ENCODE measurements at regions of chr20 and their contacts with region 1.

Region 1: GRCh38 chr20:38221119-38221589 is 39.4 kb downstream of the KIAA1755 start:
- DNase-seq: peak; percentile 94
- H3K4me3 ChIP-seq: peak overlapping the region in 1 of 2 experiments; percentile 3; a peak in 2 of 4 replicates
- H3K27ac ChIP-seq: no peak overlapping the region
- H3K4me1 ChIP-seq: peaks cover 24 to 25% of the 10 kb centered on the region in 2 experiments; a peak in 3 of 4 replicates
- H3K27me3 ChIP-seq: no peaks in the 10 kb centered on the region
- CTCF ChIP-seq: peak; percentile 97
- EP300 ChIP-seq: no peak
- RAD21 ChIP-seq: peak; percentile 95

Region 2: GRCh38 chr20:37956084-37956483 is 265.1 kb before region 1 on chr20:
- CTCF ChIA-PET with region 1: no interaction called
- POLR2A ChIA-PET with region 1: no interaction called
- DNase-seq: no peak
- H3K4me3 ChIP-seq: no peak overlapping the region
- H3K27ac ChIP-seq: no peak overlapping the region
- H3K4me1 ChIP-seq: peaks cover 0 to 4% of the 10 kb centered on the region in 2 experiments; a peak in 2 of 4 replicates
- H3K27me3 ChIP-seq: no peaks in the 10 kb centered on the region
- CTCF ChIP-seq: no peak
- EP300 ChIP-seq: no peak
- RAD21 ChIP-seq: no peak

Region 3: DNA sequence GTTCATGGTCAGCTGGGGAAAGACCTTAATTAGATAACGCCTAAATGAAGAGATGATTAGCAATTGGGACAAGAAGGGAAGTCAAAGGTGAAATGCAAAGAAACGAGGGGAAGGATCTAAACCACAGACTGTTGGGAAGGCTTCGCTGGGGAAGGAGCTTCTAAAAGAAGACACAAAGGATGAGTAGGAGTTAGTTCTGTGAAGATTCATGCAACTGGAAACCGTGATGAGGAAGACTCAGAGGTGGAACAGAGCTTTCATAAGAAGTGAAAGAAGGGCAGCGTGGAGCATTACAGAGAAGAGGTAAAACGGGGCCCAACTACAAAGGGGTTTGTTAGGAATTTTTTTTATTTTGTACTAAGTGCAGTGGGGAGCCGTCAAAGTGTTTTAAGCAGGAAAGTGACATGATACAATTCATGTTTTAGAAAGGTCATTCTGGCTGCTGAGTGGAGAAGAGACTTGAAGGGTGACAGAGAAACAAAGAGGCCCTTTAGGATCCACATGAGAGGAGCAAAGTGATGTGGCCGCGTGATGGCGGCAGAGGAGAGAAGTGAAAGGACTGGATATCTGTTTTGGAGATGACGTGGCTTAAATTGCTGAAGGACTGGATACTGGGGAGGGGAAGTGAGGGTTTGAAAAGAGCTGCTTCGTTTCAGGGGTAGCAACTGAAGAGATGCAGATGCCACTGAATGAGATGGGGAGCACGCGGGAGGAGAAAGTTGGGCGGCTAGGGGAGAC is 221.5 kb before region 1 on chr20:
- CTCF ChIA-PET with region 1: interaction called, 11 read pairs
- POLR2A ChIA-PET with region 1: no interaction called
- DNase-seq: no peak
- H3K4me3 ChIP-seq: no peak overlapping the region
- H3K27ac ChIP-seq: no peak overlapping the region
- H3K4me1 ChIP-seq: peaks cover 7 to 18% of the 10 kb centered on the region in 2 experiments; a peak in 3 of 4 replicates
- H3K27me3 ChIP-seq: no peaks in the 10 kb centered on the region
- CTCF ChIP-seq: no peak
- EP300 ChIP-seq: no peak
- RAD21 ChIP-seq: no peak

Region 4: DNA sequence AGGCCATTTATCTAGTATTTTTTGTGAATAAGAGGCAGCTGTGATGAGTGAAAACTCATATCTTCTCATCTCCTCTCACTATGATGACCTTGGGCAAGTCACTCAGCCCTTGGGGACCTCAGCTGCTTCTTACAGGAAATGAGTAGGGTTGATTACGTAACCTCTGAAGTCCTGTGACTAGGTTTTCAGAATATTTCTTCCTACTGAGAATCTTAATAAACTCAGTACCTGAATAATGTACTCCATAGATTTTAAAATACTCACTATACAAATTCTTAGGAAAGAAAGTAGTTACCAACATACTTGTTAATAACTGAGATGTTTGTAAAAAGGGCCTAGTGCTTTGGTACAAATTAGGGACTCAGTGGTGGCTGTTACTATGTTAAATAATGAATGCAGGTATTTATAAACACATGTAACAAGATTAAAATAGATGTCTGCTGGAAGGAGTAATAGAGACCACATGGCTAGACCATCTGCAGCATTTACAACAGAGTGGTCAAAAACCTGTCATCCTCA is 126.7 kb before region 1 on chr20:
- CTCF ChIA-PET with region 1: interaction called, 20 read pairs
- POLR2A ChIA-PET with region 1: no interaction called
- DNase-seq: no peak
- H3K4me3 ChIP-seq: no peak overlapping the region
- H3K27ac ChIP-seq: peak overlapping the region; percentile 69 to 75
- H3K4me1 ChIP-seq: peaks cover 16 to 38% of the 10 kb centered on the region in 2 experiments
- H3K27me3 ChIP-seq: no peaks in the 10 kb centered on the region
- CTCF ChIP-seq: no peak
- EP300 ChIP-seq: peak in 1 of 2 experiments; percentile 27; a peak in 1 of 4 replicates
- RAD21 ChIP-seq: no peak

Region 5: DNA sequence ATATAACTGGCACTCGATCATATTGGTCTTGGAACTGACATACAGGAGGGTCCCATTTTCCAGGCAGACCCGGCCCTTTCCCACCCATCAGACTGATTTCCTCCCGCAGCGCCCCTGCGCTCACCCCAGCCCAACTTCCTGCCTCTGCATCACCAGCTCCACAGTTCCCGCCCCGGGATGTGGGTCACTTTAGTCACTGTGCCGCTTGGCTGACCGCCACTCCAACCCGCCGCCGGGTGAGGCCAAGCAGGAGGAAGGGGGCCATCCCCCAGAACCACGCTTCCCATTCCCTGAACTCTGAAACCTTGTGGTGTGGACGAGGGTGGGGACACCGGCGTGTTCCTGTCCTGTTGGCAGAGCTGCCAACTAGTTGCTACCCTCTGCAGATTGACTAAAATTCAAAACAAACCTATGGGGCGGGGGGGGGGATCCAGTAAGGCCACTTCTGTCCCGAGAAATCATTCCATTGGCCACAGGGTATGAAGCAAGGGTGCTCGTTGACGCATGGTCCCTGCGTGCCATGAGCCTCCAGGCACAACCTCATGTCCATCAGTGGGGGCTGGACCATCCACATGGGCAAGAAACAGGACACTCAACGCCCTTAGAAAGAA is 68.4 kb before region 1 on chr20:
- CTCF ChIA-PET with region 1: interaction called, 27 read pairs
- POLR2A ChIA-PET with region 1: no interaction called
- DNase-seq: peak; percentile 91
- H3K4me3 ChIP-seq: no peak overlapping the region
- H3K27ac ChIP-seq: peak overlapping the region; percentile 86 to 98
- H3K4me1 ChIP-seq: peaks cover 30 to 33% of the 10 kb centered on the region in 2 experiments
- H3K27me3 ChIP-seq: no peaks in the 10 kb centered on the region
- CTCF ChIP-seq: no peak
- EP300 ChIP-seq: peak; percentile 40 to 47; a peak in 2 of 4 replicates
- RAD21 ChIP-seq: no peak

Region 6: DNA sequence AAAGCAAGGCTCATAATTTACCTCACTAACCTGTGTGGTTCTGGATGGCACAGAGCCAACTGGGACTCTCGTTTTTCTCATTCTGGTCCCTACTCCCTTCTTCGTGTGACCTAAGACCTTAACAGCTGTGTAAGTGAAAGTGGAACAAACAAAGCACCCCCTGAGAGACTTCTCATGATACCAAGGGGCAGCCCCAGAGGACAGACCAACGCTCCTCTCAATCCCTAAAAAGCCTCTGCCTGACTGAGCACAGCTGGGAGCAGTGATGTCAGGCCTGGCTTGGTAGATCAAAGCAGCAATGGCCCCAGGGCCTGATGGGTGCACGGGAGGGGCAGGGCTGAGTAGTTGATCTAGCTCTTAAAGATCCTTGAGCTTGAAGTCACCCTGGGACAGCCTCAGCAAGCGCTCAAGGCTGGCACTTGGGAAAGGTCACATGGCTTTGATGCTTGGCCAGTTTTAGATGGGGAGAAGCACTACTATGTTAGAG is 39.9 kb before region 1 on chr20:
- CTCF ChIA-PET with region 1: interaction called, 16 read pairs
- POLR2A ChIA-PET with region 1: no interaction called
- DNase-seq: no peak
- H3K4me3 ChIP-seq: no peak overlapping the region
- H3K27ac ChIP-seq: no peak overlapping the region; a peak in 1 of 4 replicates
- H3K4me1 ChIP-seq: peaks cover 0 to 7% of the 10 kb centered on the region in 2 experiments; a peak in 1 of 4 replicates
- H3K27me3 ChIP-seq: no peaks in the 10 kb centered on the region
- CTCF ChIP-seq: no peak
- EP300 ChIP-seq: no peak
- RAD21 ChIP-seq: no peak

Region 7: GRCh38 chr20:38298705-38299288 is 77.6 kb after region 1 on chr20:
- CTCF ChIA-PET with region 1: interaction called, 10 read pairs
- POLR2A ChIA-PET with region 1: no interaction called
- DNase-seq: peak; percentile 29
- H3K4me3 ChIP-seq: no peak overlapping the region
- H3K27ac ChIP-seq: no peak overlapping the region
- H3K4me1 ChIP-seq: peaks cover 0 to 10% of the 10 kb centered on the region in 2 experiments; a peak in 1 of 4 replicates
- H3K27me3 ChIP-seq: no peaks in the 10 kb centered on the region
- CTCF ChIP-seq: no peak
- EP300 ChIP-seq: no peak
- RAD21 ChIP-seq: no peak

Measured in SK-N-SH (cell line).